T-cell (primary cell): ENCODE measurements at regions of chr7 and their contacts with region 1.

Region 1: GRCh38 chr7:129923709-129924108 is 29.1 kb downstream of the UBE2H start:
- DNase-seq: no peak
- ATAC-seq: no peak
- H3K4me3 ChIP-seq: no peak overlapping the region
- H3K4me3 Mint-ChIP-seq: peak overlapping the region in 1 of 3 donors; percentile 52
- H3K27ac ChIP-seq: no peak overlapping the region
- H3K27ac Mint-ChIP-seq: peak overlapping the region; percentile 10 to 12
- H3K4me1 ChIP-seq: peaks cover 0 to 4% of the 10 kb centered on the region in 2 experiments
- H3K4me1 Mint-ChIP-seq: peaks cover 48 to 55% (median 50%) of the 10 kb centered on the region in 3 donors
- H3K27me3 ChIP-seq: no peaks in the 10 kb centered on the region
- H3K27me3 Mint-ChIP-seq: no peaks in the 10 kb centered on the region

Region 2: GRCh38 chr7:130037703-130038102 is 114.0 kb after region 1 on chr7:
- CTCF ChIA-PET with region 1: interaction called in 1 of 2 experiments, 11 read pairs
- POLR2A ChIA-PET with region 1: no interaction called
- DNase-seq: no peak
- ATAC-seq: no peak
- H3K4me3 ChIP-seq: no peak overlapping the region
- H3K4me3 Mint-ChIP-seq: no peak overlapping the region
- H3K27ac ChIP-seq: no peak overlapping the region
- H3K27ac Mint-ChIP-seq: no peak overlapping the region
- H3K4me1 ChIP-seq: no peaks in the 10 kb centered on the region
- H3K4me1 Mint-ChIP-seq: no peaks in the 10 kb centered on the region
- H3K27me3 ChIP-seq: no peaks in the 10 kb centered on the region
- H3K27me3 Mint-ChIP-seq: no peaks in the 10 kb centered on the region